Calu3 (cell line): ENCODE measurements at regions of chr6 and their contacts with region 1.

Region 1: GRCh38 chr6:25173951-25174474 is 105.2 kb upstream of the CARMIL1 start:
- DNase-seq: peak; percentile 83
- H3K4me3 Mint-ChIP-seq: no peak overlapping the region
- H3K27ac Mint-ChIP-seq: peak overlapping the region; percentile 73
- H3K4me1 Mint-ChIP-seq: peaks cover 57% of the 10 kb centered on the region
- H3K27me3 Mint-ChIP-seq: no peaks in the 10 kb centered on the region
- CTCF ChIP-seq: no peak

Region 2: DNA sequence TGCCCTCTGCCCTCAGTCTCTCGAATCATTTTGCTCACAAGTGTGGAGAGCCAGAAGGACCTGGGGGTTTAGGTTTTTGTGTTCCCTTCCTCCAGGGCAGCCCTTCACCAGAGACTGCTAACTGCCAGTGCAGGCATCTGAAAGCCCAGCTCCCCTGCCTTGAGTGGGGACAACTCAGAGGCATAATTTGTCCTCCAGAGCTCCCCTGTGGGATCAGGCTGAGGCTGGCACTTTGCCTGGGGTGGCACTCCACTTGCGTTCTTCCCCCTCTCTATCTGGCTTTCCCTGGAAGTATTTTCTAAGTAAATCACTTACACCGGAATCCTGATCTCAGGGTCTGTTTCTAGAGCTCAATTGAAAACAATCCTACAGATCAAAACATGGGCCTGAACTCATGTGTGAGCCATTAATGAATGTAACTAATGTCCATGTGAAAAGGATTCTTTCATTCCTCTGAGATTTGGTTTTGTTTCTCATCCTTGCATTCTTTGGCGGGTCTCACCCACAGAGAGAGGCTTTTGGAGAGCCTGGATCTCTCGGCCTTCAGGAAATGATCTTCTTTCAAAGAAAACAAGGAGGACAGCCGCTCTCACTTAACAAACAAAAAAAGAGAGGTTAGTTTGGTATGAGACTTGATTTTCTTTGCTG is 112.6 kb before region 1 on chr6:
- CTCF ChIA-PET with region 1: interaction called, 13 read pairs
- intact Hi-C with region 1: no loop called
- DNase-seq: no peak
- H3K4me3 Mint-ChIP-seq: no peak overlapping the region
- H3K27ac Mint-ChIP-seq: no peak overlapping the region
- H3K4me1 Mint-ChIP-seq: no peaks in the 10 kb centered on the region
- H3K27me3 Mint-ChIP-seq: peaks cover 23% of the 10 kb centered on the region
- CTCF ChIP-seq: no peak

Region 3: DNA sequence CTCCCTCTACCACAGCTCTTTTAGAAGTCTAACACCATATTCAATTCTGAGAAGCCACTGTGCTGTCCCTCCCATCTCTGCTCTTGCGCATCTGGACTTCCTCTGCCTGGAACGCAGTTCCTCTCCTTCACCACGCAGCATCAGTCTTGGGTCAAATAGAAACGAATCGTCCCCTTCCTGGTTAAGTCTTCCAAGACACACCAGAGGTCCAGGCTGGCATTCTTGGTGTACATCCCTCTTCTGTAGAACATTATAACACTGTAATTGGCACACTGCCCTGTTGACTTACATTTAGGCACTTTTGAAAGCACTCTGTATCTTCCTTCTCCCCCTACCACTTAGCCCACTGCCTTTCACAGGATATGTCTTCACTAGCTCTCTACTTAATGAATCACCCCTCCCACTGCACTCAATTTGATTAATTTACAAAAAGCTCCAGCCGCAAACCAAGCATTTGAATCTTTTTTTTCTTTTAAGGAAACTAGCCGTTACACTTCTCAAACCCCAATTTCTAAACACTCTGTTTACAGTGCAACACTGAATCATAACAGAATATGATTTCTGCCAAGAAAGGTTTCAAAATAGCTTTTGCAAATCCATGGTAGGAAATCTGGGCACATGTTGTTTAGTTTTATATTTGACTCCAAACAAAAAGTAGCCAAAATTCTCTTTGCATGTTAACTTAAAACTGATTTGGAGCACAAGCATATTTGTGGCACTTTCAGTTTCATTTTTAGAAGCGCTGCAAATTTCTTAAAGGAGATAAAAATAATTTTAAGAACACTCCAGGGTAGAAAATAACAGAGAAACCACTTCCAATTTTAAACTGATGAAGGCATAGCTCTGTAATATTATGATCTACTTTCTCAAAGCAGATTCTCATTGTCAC is 35.5 kb before region 1 on chr6:
- CTCF ChIA-PET with region 1: interaction called, 6 read pairs
- intact Hi-C with region 1: loop called (anchors 1 kb)
- DNase-seq: peak; percentile 72
- H3K4me3 Mint-ChIP-seq: peak overlapping the region; percentile 69
- H3K27ac Mint-ChIP-seq: peak overlapping the region; percentile 11
- H3K4me1 Mint-ChIP-seq: peaks cover 20% of the 10 kb centered on the region
- H3K27me3 Mint-ChIP-seq: no peaks in the 10 kb centered on the region
- CTCF ChIP-seq: no peak

Region 4: GRCh38 chr6:25193460-25194171 is 19.6 kb after region 1 on chr6:
- CTCF ChIA-PET with region 1: interaction called, 33 read pairs
- intact Hi-C with region 1: no loop called
- DNase-seq: peak; percentile 76
- H3K4me3 Mint-ChIP-seq: peak overlapping the region; percentile 27
- H3K27ac Mint-ChIP-seq: peak overlapping the region; percentile 27
- H3K4me1 Mint-ChIP-seq: peaks cover 27% of the 10 kb centered on the region
- H3K27me3 Mint-ChIP-seq: no peaks in the 10 kb centered on the region
- CTCF ChIP-seq: no peak

Region 5: DNA sequence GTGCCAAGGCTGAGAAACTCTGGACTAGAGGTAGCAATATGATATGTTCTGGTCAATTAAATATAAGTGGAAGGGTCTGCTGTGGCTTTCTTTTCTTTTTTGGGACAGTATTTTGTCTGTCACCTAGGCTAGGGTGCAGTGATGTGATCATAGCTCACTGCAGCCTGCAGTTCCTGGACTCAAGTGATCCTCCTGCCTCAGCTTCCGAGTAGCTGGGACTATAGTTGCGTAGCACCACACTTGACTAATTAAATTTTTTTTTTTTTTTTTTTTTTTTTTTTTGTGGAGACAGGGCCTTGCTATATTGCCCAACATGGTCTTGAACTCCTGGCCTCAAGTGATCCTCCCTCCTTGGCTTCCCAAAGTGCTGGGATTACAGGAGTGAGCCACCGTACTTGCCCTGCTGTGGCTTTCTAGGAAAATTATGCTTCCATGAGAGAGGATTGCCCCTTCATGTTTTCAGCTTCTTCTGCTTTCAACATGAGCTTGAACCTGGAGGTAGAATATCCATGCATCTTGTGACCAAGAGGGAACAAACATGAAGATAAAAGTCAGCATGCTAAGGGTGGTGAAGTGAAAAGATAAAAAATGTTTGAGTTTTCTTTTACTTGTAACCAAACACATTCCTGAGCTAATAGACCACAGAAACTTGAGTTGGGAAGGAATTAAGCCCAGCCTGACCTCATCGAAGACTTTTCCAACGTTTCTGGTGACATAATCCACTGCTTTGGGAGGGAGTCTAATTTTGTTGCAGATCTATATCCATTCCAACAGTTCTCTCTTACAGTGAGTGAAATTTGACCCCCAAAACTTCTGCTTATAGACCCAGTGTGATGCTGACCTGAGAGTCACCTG is 180.3 kb after region 1 on chr6:
- CTCF ChIA-PET with region 1: no interaction called
- intact Hi-C with region 1: no loop called
- DNase-seq: no peak
- H3K4me3 Mint-ChIP-seq: no peak overlapping the region
- H3K27ac Mint-ChIP-seq: no peak overlapping the region
- H3K4me1 Mint-ChIP-seq: peaks cover 57% of the 10 kb centered on the region
- H3K27me3 Mint-ChIP-seq: no peaks in the 10 kb centered on the region
- CTCF ChIP-seq: no peak

Region 6: DNA sequence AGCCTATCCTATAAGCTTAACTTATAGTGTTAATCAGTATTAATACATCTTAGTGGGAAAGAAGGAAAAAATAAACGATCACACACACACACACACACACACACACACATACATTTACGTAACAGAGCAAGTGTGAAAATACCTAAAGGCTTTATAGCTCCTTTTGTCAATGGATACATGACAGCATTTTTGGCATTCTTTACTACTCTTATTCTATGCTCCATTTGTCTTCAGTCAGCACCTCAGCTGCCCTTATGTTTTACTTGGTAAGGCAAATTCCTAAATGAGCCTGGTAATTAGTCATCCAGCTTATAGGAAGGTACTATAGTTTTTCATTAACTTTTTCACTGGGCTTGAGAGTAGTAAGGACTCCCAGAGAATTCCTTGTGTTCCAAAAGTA is 725.1 kb after region 1 on chr6:
- CTCF ChIA-PET with region 1: interaction called, 11 read pairs
- intact Hi-C with region 1: no loop called
- DNase-seq: no peak
- H3K4me3 Mint-ChIP-seq: peak overlapping the region; percentile 21
- H3K27ac Mint-ChIP-seq: peak overlapping the region; percentile 63
- H3K4me1 Mint-ChIP-seq: peaks cover 30% of the 10 kb centered on the region
- H3K27me3 Mint-ChIP-seq: no peaks in the 10 kb centered on the region
- CTCF ChIP-seq: no peak